HepG2 (cell line): ENCODE measurements at regions of chrX and their contacts with region 1.

Region 1: GRCh38 chrX:150715184-150715583 is 22.0 kb downstream of the MTMR1 start:
- DNase-seq: no peak
- ATAC-seq: no peak
- H3K4me3 ChIP-seq: no peak overlapping the region
- H3K27ac ChIP-seq: no peak overlapping the region
- H3K4me1 ChIP-seq: no peaks in the 10 kb centered on the region
- H3K27me3 ChIP-seq: no peaks in the 10 kb centered on the region
- CTCF ChIP-seq: no peak
- EP300 ChIP-seq: no peak
- POLR2A ChIP-seq: no peak
- RAD21 ChIP-seq: no peak

Region 2: DNA sequence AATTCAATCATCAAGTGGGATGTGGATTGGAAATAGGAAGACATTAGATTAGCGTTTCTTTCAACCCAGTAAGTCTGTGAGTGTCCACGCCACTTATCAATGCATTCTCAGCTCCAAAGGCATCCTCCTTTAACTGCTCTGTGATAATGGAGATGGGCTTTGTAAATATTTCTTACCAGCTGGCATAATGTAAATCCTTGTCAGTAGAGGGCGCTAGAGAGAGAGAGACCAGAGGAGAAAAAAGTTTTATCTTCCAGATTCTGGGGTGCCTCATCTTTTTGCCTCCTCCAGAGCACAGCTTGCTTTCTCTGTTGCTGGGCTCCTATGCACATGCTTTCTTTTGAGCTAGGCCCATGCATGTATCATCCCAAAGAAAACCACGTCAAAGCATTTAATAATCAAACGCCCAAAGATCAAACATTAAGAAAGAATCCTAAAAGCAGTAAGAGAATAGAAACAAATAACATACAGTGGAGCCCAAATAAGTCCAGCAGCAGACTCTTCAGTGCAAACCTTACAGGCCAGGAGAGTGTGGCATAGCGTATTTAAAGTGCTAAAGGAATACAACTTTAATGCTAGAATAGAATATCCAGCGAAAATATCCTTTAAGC is 31.5 kb before region 1 on chrX:
- CTCF ChIA-PET with region 1: interaction called, 14 read pairs
- POLR2A ChIA-PET with region 1: no interaction called
- in situ Hi-C with region 1: no loop called
- intact Hi-C with region 1: loop called (anchors 2 kb)
- DNase-seq: peak; percentile 26
- ATAC-seq: no peak
- H3K4me3 ChIP-seq: no peak overlapping the region
- H3K27ac ChIP-seq: no peak overlapping the region
- H3K4me1 ChIP-seq: no peaks in the 10 kb centered on the region
- H3K27me3 ChIP-seq: no peaks in the 10 kb centered on the region
- CTCF ChIP-seq: peak; percentile 50
- EP300 ChIP-seq: no peak
- POLR2A ChIP-seq: no peak
- RAD21 ChIP-seq: no peak